ENCODE measurements at regions of chr6 and their contacts with region 1.

Region 1: DNA sequence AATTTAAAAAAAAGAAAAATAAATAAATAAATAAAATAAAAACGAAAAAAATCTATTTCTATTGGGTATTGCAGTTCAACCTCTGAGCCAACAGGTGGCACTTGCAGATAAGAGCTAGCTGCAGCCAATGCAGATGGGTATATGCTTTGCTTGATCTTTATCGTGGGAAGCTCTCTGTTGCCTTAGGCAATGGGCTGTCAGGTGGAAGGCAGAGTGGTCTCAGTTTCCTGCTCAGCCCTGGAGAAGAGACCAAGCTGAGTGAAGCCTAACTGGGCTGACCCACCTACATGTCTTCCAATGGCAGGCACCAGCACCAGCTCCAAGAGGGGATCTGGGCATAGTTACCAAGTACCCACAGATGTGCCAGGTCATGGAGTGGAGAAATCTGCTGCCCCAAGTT is 95.0 kb downstream of the AK9 start:
- DNase-seq: peak; percentile 44
- ATAC-seq: peak; percentile 75
- H3K4me3 Mint-ChIP-seq: no peak overlapping the region
- H3K27ac Mint-ChIP-seq: no peak overlapping the region
- H3K4me1 Mint-ChIP-seq: peaks cover 8% of the 10 kb centered on the region
- H3K27me3 Mint-ChIP-seq: no peaks in the 10 kb centered on the region

Region 2: DNA sequence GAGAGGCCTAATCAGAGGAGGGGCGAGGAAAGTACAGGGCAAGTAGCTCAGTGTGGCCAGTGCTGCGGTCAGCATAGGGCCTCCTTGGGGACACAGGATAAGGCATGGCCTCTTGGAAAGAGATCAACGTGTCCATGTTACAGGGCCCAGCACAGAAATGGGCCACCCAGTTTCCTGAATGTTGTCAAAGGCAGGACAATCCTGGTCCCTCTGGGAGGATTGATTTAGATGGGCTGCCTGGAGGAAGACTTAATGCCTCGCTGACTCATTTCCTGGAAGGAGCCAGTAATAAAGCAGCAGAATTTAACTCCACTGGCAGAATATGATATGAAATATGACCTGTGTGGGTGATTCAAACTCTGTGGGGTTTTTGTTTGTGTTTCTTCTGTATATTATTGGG is 802.8 kb after region 1 on chr6:
- CTCF ChIA-PET with region 1: no interaction called
- POLR2A ChIA-PET with region 1: no interaction called
- intact Hi-C with region 1: loop called (anchors 5 to 10 kb)
- DNase-seq: no peak
- ATAC-seq: no peak
- H3K4me3 Mint-ChIP-seq: no peak overlapping the region
- H3K27ac Mint-ChIP-seq: no peak overlapping the region
- H3K4me1 Mint-ChIP-seq: no peaks in the 10 kb centered on the region
- H3K27me3 Mint-ChIP-seq: no peaks in the 10 kb centered on the region

Measured in activated CD4-positive, alpha-beta T cell treated with anti-CD3 and anti-CD28 coated beads for 36 hours (primary cell).